ENCODE measurements at regions of chr11 and their contacts with region 1.

Region 1: GRCh38 chr11:1916986-1917670 is 2.4 kb upstream of the TNNT3 start:
- DNase-seq: peak in 1 of 5 donors; percentile 55
- H3K4me3 ChIP-seq: no peak overlapping the region
- H3K27ac ChIP-seq: no peak overlapping the region
- H3K4me1 ChIP-seq: no peaks in the 10 kb centered on the region
- H3K27me3 ChIP-seq: no peaks in the 10 kb centered on the region
- CTCF ChIP-seq: no peak

Region 2: DNA sequence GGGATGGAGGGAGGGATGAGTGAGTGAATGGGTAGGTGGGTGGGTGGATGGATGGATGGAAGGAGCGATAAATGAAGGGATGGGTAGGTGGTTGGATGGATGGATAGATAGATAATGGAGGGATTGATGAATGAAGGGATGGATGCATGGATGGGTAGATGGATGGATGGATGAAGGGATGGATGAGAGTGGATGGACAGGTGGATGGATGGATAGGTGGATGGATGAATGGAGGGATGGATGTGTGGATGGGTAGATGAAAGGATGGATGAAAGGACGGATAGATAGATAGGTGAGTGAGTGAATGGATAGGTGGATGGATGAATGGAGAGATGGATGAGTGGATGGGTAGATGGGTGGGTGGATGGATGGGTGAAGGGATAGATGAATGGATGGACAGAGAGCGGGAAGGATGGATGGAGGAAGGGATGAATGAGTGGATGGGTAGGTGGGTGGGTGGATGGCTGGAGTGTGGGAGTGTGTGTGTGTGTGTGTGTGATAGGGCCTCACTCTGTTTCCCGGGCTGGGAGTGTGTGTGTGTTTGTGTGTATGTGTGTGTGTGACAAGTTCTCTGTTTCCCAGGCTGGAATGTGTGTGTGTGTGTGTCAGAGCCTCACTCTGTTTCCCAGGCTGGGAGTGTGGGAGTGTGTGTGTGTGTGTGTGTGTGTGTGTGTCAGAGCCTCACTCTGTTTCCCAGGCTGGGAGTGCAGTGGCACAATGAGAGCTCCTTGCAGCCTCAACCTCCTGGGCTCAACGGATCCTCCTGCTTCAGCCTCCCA is 23.4 kb before region 1 on chr11:
- intact Hi-C with region 1: loop called (anchors 1 kb)
- DNase-seq: no peak
- H3K4me3 ChIP-seq: no peak overlapping the region
- H3K27ac ChIP-seq: no peak overlapping the region
- H3K4me1 ChIP-seq: no peaks in the 10 kb centered on the region
- H3K27me3 ChIP-seq: no peaks in the 10 kb centered on the region
- CTCF ChIP-seq: no peak